SK-N-SH (cell line): ENCODE measurements at regions of chr2 and their contacts with region 1.

Region 1: DNA sequence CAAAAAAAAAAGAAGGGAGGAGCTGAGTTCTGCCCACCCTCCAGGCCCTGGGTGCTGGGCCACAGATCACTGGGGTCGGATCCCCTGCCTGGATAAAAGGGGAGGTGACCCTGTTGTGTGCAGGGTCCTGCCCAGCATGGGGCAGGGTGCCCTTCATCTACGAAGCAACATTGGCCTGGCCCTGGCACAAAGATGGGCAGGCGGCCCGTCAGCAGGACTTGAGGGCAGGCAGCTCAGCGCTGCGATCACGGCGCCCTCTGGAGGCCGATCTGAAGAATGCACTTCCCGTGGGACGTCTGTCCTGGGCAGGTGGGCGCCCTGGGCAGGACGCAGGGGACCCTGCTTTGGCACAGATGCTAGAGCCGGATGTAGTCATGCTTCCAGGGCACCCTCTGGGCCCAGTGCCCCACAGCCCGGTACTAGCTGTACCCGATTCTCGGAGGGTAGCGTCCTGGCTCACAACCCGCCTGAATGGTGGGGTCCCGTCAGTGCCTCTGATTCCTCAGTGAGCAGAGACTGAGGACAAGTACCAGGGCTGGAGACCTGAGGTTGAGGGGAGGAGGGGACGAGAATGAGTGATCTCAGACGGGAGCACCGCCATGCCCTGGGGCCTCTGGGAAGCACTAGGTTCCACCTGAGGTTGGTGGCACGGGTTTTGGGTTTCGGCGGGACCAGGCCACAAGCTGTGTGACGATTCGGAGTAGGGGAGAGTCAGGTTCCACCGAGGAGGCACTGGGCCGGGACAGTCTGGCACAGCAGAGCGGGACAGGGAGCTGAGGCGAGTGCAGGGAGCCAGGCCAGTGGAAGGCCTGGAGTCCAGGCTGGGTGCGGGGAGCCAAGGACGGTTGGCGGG is 18.0 kb downstream of the ARID5A start:
- DNase-seq: peak; percentile 90
- H3K4me3 ChIP-seq: no peak overlapping the region; a peak in 1 of 4 replicates
- H3K27ac ChIP-seq: no peak overlapping the region
- H3K4me1 ChIP-seq: peaks cover 0 to 3% of the 10 kb centered on the region in 2 experiments; a peak in 1 of 4 replicates
- H3K27me3 ChIP-seq: no peaks in the 10 kb centered on the region
- CTCF ChIP-seq: peak; percentile 90
- EP300 ChIP-seq: no peak
- RAD21 ChIP-seq: peak; percentile 82

Region 2: GRCh38 chr2:96495982-96496629 is 58.4 kb before region 1 on chr2:
- CTCF ChIA-PET with region 1: interaction called, 10 read pairs
- POLR2A ChIA-PET with region 1: no interaction called
- DNase-seq: no peak
- H3K4me3 ChIP-seq: no peak overlapping the region
- H3K27ac ChIP-seq: no peak overlapping the region
- H3K4me1 ChIP-seq: no peaks in the 10 kb centered on the region; a peak in 1 of 4 replicates
- H3K27me3 ChIP-seq: peaks cover 47% of the 10 kb centered on the region
- CTCF ChIP-seq: no peak
- EP300 ChIP-seq: no peak
- RAD21 ChIP-seq: no peak

Region 3: GRCh38 chr2:96536445-96537065 is 18.0 kb before region 1 on chr2 and contains the start of gene ARID5A:
- CTCF ChIA-PET with region 1: interaction called, 91 read pairs
- POLR2A ChIA-PET with region 1: interaction called, 5 read pairs
- DNase-seq: peak; percentile 98
- H3K4me3 ChIP-seq: peak within 1 kb of the TSS; percentile 69 to 79
- H3K27ac ChIP-seq: peak within 1 kb of the TSS in 1 of 2 experiments; percentile 46; a peak in 1 of 4 replicates
- H3K4me1 ChIP-seq: peaks cover 28 to 46% of the 10 kb centered on the region in 2 experiments
- H3K27me3 ChIP-seq: no peaks in the 10 kb centered on the region
- CTCF ChIP-seq: no peak
- EP300 ChIP-seq: no peak
- RAD21 ChIP-seq: no peak
- polyA plus RNA-seq, gene ARID5A: 3.3 TPM in 2 replicates

Region 4: DNA sequence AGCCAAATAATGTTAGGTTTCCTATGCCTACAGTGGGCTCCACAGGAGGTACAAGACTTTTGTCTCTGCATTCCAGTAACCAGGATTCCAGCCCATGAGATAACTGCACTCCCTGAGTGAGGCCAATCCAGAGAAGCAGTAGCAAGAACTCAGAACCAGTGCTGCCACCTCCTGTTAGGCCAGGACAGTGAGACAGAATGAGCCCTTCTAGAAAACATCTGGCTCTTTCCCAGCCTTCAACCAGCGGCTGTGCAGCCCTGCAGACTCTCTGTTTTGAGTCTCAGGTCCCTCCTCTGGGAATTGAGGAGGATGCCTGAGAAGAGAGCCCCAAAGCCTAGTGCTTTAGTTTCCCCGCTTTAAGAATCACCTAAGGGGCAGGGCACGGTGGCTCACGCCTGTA is 26.3 kb after region 1 on chr2:
- CTCF ChIA-PET with region 1: interaction called, 14 read pairs
- POLR2A ChIA-PET with region 1: no interaction called
- DNase-seq: peak; percentile 20
- H3K4me3 ChIP-seq: no peak overlapping the region
- H3K27ac ChIP-seq: no peak overlapping the region
- H3K4me1 ChIP-seq: no peaks in the 10 kb centered on the region
- H3K27me3 ChIP-seq: no peaks in the 10 kb centered on the region
- CTCF ChIP-seq: peak; percentile 32
- EP300 ChIP-seq: no peak
- RAD21 ChIP-seq: peak; percentile 12; the same call in 1 of the 2 replicates